Gastrocnemius medialis (tissue), 4 donors: ENCODE measurements at regions of chr22 and their contacts with region 1.

Region 1: GRCh38 chr22:40024201-40025061 is 29.7 kb downstream of the FAM83F start:
- DNase-seq: peak; percentile 34 to 38
- ATAC-seq: peak in 1 of 2 donors; percentile 62
- H3K4me3 ChIP-seq: no peak overlapping the region
- H3K27ac ChIP-seq: no peak overlapping the region
- H3K4me1 ChIP-seq: no peaks in the 10 kb centered on the region
- H3K27me3 ChIP-seq: no peaks in the 10 kb centered on the region
- CTCF ChIP-seq: peak; percentile 61 to 85 (median 73)
- POLR2A ChIP-seq: no peak

Region 2: DNA sequence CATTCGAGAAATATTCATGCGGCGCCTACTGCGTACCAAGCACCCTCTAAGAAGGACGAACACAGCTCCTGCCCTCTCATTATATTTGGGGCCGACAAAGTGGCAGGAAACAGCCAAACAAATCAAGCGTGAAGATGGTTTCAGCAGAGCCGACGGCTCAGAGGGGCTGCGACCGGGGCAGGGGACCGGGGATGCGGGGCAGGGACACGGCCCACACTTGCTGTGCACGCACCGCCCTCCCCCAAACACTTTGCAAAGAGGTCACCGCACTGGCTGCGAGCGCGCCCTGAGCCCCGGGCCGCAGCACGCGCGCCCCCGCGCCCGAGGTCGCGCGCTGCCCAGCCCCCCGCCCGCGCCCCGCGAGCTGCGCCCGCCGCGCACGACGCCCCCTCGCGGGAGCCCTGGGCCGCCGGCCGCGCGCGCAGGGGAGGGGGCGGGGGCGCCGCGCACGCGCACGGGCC is 674.9 kb before region 1 on chr22:
- in situ Hi-C with region 1: loop called in 1 of 4 experiments (anchors 25 kb)
- intact Hi-C with region 1: no loop called
- DNase-seq: no peak
- ATAC-seq: peak; percentile 77
- H3K4me3 ChIP-seq: peak overlapping the region; percentile 69 to 86 (median 78)
- H3K27ac ChIP-seq: peak overlapping the region; percentile 72 to 81 (median 76)
- H3K4me1 ChIP-seq: peaks cover 9 to 12% of the 10 kb centered on the region in 2 donors
- H3K27me3 ChIP-seq: no peaks in the 10 kb centered on the region
- CTCF ChIP-seq: no peak
- POLR2A ChIP-seq: no peak

Region 3: GRCh38 chr22:39612811-39613548 is 411.5 kb before region 1 on chr22:
- in situ Hi-C with region 1: loop called in 1 of 4 experiments (anchors 10 kb)
- intact Hi-C with region 1: no loop called
- DNase-seq: no peak
- ATAC-seq: no peak
- H3K4me3 ChIP-seq: no peak overlapping the region
- H3K27ac ChIP-seq: no peak overlapping the region
- H3K4me1 ChIP-seq: no peaks in the 10 kb centered on the region
- H3K27me3 ChIP-seq: peaks cover 19 to 31% (median 20%) of the 10 kb centered on the region in 3 donors
- CTCF ChIP-seq: no peak
- POLR2A ChIP-seq: no peak

Region 4: GRCh38 chr22:39622881-39623367 is 401.5 kb before region 1 on chr22:
- in situ Hi-C with region 1: loop called in 1 of 4 experiments (anchors 10 kb)
- intact Hi-C with region 1: loop called (anchors 1 kb)
- DNase-seq: peak; percentile 31 to 47
- ATAC-seq: peak; percentile 58 to 75
- H3K4me3 ChIP-seq: no peak overlapping the region
- H3K27ac ChIP-seq: no peak overlapping the region
- H3K4me1 ChIP-seq: no peaks in the 10 kb centered on the region
- H3K27me3 ChIP-seq: peaks cover 22 to 55% (median 23%) of the 10 kb centered on the region in 3 donors
- CTCF ChIP-seq: peak; percentile 46 to 72 (median 63)
- POLR2A ChIP-seq: no peak

Region 5: DNA sequence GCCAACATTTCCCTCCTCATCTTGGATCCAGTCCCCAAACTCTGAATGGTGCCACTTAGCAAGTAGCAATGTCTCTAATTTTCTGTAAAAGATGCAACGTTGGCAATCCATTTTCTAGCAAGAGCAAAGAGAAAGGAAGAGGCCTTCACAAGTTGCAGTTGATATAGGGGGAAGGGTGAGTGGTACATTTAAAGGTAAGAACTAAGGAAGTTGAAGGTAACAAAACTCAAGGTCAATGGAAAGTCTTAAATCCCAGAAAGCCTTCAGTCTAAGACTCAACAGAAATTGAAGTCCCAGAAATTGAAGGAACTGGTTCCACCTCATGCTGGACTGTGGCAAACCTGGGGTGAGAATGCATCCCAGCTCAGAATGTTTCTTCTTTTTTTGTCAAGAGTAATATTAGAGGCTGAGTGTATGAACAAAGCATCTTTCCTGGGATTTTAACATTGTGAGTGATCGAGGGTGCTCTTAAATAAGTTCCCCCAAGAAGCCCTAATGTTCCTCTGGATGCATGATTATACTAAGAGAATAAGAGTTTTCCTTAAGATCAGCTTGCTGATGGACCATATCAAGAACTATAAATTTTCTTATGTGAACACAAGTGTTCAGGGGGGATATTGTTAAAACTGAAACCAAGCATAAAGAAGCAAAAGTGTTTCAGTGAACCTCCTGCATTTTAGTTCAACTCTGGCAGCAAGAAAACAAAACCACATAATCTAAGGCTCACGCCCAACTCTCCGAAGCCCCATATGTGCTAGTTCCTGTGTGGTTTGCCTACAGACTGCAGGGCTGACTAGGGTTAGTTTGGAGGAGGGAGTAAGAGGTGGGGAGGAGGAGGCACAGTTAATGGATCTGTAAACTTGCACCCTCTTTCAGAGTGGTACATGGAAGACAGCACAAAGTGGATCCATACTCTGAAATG is 123.9 kb before region 1 on chr22 and contains the start of gene GRAP2:
- in situ Hi-C with region 1: no loop called
- intact Hi-C with region 1: no loop called
- DNase-seq: no peak
- ATAC-seq: no peak
- H3K4me3 ChIP-seq: no peak within 1 kb of the TSS
- H3K27ac ChIP-seq: no peak within 1 kb of the TSS
- H3K4me1 ChIP-seq: no peaks in the 10 kb centered on the region
- H3K27me3 ChIP-seq: peaks cover 0 to 8% (median 0%) of the 10 kb centered on the region in 3 donors
- CTCF ChIP-seq: no peak
- POLR2A ChIP-seq: no peak
- total RNA-seq, gene GRAP2: 0.07 to 0.97 TPM in 2 of 4 donors, not detected in the others

Region 6: GRCh38 chr22:39920134-39920743 is 104.2 kb before region 1 on chr22:
- in situ Hi-C with region 1: no loop called
- intact Hi-C with region 1: no loop called
- DNase-seq: no peak
- ATAC-seq: no peak
- H3K4me3 ChIP-seq: no peak overlapping the region
- H3K27ac ChIP-seq: no peak overlapping the region
- H3K4me1 ChIP-seq: no peaks in the 10 kb centered on the region
- H3K27me3 ChIP-seq: peaks cover 9 to 23% (median 15%) of the 10 kb centered on the region in 3 donors
- CTCF ChIP-seq: no peak
- POLR2A ChIP-seq: no peak

Region 7: DNA sequence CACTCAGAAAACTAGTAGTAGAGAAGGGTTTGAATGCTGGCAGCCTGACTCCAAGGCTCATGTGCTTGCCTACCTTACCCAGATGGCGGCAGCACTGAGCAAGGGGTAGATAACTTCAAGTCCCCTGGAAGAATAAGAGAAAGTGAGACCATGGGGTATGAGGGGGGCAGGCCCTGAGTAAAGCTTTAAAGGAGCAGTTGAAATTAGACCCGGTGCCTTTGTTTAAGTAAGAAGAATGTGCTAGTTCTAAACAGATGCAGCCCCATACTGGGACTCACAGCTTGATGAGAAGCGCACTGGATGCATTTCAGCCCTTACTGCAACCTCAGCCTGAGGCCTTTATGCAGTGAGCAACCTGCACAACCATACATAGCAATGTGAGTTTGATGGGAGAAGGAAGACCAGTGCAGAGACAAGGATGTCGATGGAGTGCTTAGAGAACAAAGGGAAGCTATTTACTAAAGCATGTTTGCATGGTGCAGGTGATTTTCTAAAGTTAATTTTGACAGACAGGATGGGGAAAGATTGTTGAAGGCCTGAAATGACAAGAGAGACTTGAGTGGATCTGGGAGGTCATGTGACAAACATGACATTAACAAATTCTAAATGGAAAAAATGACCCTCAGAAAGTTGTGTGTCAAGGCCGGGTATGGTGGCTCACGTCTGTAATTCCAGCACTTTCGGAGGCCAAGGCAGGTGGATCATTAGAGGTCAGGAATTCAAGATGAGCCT is 91.3 kb before region 1 on chr22:
- in situ Hi-C with region 1: no loop called
- intact Hi-C with region 1: loop called (anchors 1 kb)
- DNase-seq: no peak
- ATAC-seq: no peak
- H3K4me3 ChIP-seq: no peak overlapping the region
- H3K27ac ChIP-seq: no peak overlapping the region
- H3K4me1 ChIP-seq: no peaks in the 10 kb centered on the region
- H3K27me3 ChIP-seq: peaks cover 19 to 27% (median 22%) of the 10 kb centered on the region in 3 donors
- CTCF ChIP-seq: peak in 4 of 5 experiments; percentile 12 to 40 (median 25)
- POLR2A ChIP-seq: no peak